ENCODE measurements at regions of chr19 and their contacts with region 1.

Region 1: GRCh38 chr19:14136509-14137281 is at the start of gene ASF1B:
- DNase-seq: peak; percentile 100
- ATAC-seq: peak; percentile 86
- H3K4me3 ChIP-seq: peak within 1 kb of the TSS; percentile 84 to 87
- H3K27ac ChIP-seq: peak within 1 kb of the TSS; percentile 92
- H3K4me1 ChIP-seq: peaks cover 13 to 32% of the 10 kb centered on the region in 2 experiments
- H3K27me3 ChIP-seq: no peaks in the 10 kb centered on the region
- CTCF ChIP-seq: peak; percentile 51 to 94 (median 70); a peak in 5 of 6 replicates
- POLR2A ChIP-seq: peak; percentile 92
- RAD21 ChIP-seq: peak; percentile 98
- total RNA-seq, gene ASF1B: 78.1 TPM

Region 2: GRCh38 chr19:14114854-14115253 is 21.8 kb before region 1 on chr19:
- CTCF ChIA-PET with region 1: interaction called, 18 read pairs
- POLR2A ChIA-PET with region 1: interaction called, 4 read pairs
- RAD21 ChIA-PET with region 1: no interaction called
- intact Hi-C with region 1: no loop called
- DNase-seq: no peak
- ATAC-seq: no peak
- H3K4me3 ChIP-seq: peak overlapping the region in 1 of 2 experiments; percentile 88; a peak in 1 of 4 replicates
- H3K27ac ChIP-seq: peak overlapping the region; percentile 68
- H3K4me1 ChIP-seq: peaks cover 36 to 47% of the 10 kb centered on the region in 2 experiments
- H3K27me3 ChIP-seq: no peaks in the 10 kb centered on the region
- CTCF ChIP-seq: peak; percentile 68 to 80 (median 74); a peak in 5 of 6 replicates
- POLR2A ChIP-seq: no peak
- RAD21 ChIP-seq: peak; percentile 72

Region 3: GRCh38 chr19:14237014-14237941 is 100.6 kb after region 1 on chr19:
- CTCF ChIA-PET with region 1: no interaction called
- POLR2A ChIA-PET with region 1: no interaction called
- RAD21 ChIA-PET with region 1: no interaction called
- intact Hi-C with region 1: no loop called
- DNase-seq: no peak
- ATAC-seq: no peak
- H3K4me3 ChIP-seq: no peak overlapping the region
- H3K27ac ChIP-seq: no peak overlapping the region
- H3K4me1 ChIP-seq: no peaks in the 10 kb centered on the region
- H3K27me3 ChIP-seq: no peaks in the 10 kb centered on the region
- CTCF ChIP-seq: no peak
- POLR2A ChIP-seq: no peak
- RAD21 ChIP-seq: no peak

Region 4: GRCh38 chr19:14337510-14337909 is 200.8 kb after region 1 on chr19:
- CTCF ChIA-PET with region 1: interaction called, 10 read pairs
- POLR2A ChIA-PET with region 1: interaction called, 14 read pairs
- RAD21 ChIA-PET with region 1: no interaction called
- intact Hi-C with region 1: no loop called
- DNase-seq: peak; percentile 79
- ATAC-seq: peak; percentile 80
- H3K4me3 ChIP-seq: no peak overlapping the region
- H3K27ac ChIP-seq: 0 out of 2 replicates have a peak overlapping the region, but pooled peaks have one; percentile 10
- H3K4me1 ChIP-seq: peaks cover 8 to 25% of the 10 kb centered on the region in 2 experiments; a peak in 3 of 4 replicates
- H3K27me3 ChIP-seq: no peaks in the 10 kb centered on the region
- CTCF ChIP-seq: no peak
- POLR2A ChIP-seq: no peak
- RAD21 ChIP-seq: no peak

Region 5: GRCh38 chr19:14405758-14406644 is 269.3 kb after region 1 on chr19:
- CTCF ChIA-PET with region 1: interaction called, 35 read pairs
- POLR2A ChIA-PET with region 1: interaction called, 7 read pairs
- RAD21 ChIA-PET with region 1: interaction called, 3 to 5 read pairs
- intact Hi-C with region 1: loop called (anchors 5 kb)
- DNase-seq: peak; percentile 89
- ATAC-seq: peak; percentile 86
- H3K4me3 ChIP-seq: no peak overlapping the region
- H3K27ac ChIP-seq: peak overlapping the region; percentile 64
- H3K4me1 ChIP-seq: peaks cover 9 to 35% of the 10 kb centered on the region in 2 experiments; a peak in 3 of 4 replicates
- H3K27me3 ChIP-seq: no peaks in the 10 kb centered on the region
- CTCF ChIP-seq: peak; percentile 57 to 90 (median 61)
- POLR2A ChIP-seq: no peak
- RAD21 ChIP-seq: peak; percentile 94

Region 6: GRCh38 chr19:14487370-14488125 is 350.9 kb after region 1 on chr19:
- CTCF ChIA-PET with region 1: interaction called, 6 read pairs
- POLR2A ChIA-PET with region 1: no interaction called
- RAD21 ChIA-PET with region 1: no interaction called
- intact Hi-C with region 1: loop called (anchors 5 kb)
- DNase-seq: no peak
- ATAC-seq: no peak
- H3K4me3 ChIP-seq: no peak overlapping the region
- H3K27ac ChIP-seq: no peak overlapping the region
- H3K4me1 ChIP-seq: peaks cover 0 to 3% of the 10 kb centered on the region in 2 experiments; a peak in 1 of 4 replicates
- H3K27me3 ChIP-seq: no peaks in the 10 kb centered on the region
- CTCF ChIP-seq: no peak
- POLR2A ChIP-seq: no peak
- RAD21 ChIP-seq: no peak

Region 7: GRCh38 chr19:14536926-14537692 is 400.4 kb after region 1 on chr19:
- CTCF ChIA-PET with region 1: no interaction called
- POLR2A ChIA-PET with region 1: no interaction called
- RAD21 ChIA-PET with region 1: no interaction called
- intact Hi-C with region 1: no loop called
- DNase-seq: peak; percentile 88
- ATAC-seq: peak; percentile 96
- H3K4me3 ChIP-seq: no peak overlapping the region
- H3K27ac ChIP-seq: peak overlapping the region; percentile 45
- H3K4me1 ChIP-seq: peaks cover 13 to 36% of the 10 kb centered on the region in 2 experiments
- H3K27me3 ChIP-seq: no peaks in the 10 kb centered on the region
- CTCF ChIP-seq: no peak
- POLR2A ChIP-seq: no peak
- RAD21 ChIP-seq: no peak

Measured in HCT116 (cell line).